CD4-positive, alpha-beta memory T cell (primary cell): ENCODE measurements at regions of chr1 and their contacts with region 1.

Region 1: GRCh38 chr1:197327776-197328364 is 59.8 kb downstream of the CRB1 start:
- DNase-seq: peak in 1 of 5 donors; percentile 3
- H3K4me3 ChIP-seq: no peak overlapping the region
- H3K4me3 Mint-ChIP-seq: no peak overlapping the region
- H3K27ac ChIP-seq: no peak overlapping the region
- H3K27ac Mint-ChIP-seq: peak overlapping the region in 1 of 7 donors; percentile 25
- H3K4me1 ChIP-seq: no peaks in the 10 kb centered on the region
- H3K4me1 Mint-ChIP-seq: no peaks in the 10 kb centered on the region
- H3K27me3 ChIP-seq: no peaks in the 10 kb centered on the region
- H3K27me3 Mint-ChIP-seq: no peaks in the 10 kb centered on the region

Region 2: GRCh38 chr1:197180252-197180878 is 147.5 kb before region 1 on chr1:
- CTCF ChIA-PET with region 1: interaction called, 10 read pairs
- POLR2A ChIA-PET with region 1: no interaction called
- intact Hi-C with region 1: no loop called
- DNase-seq: peak in 4 of 5 donors; percentile 26 to 36 (median 32)
- H3K4me3 ChIP-seq: no peak overlapping the region
- H3K4me3 Mint-ChIP-seq: no peak overlapping the region
- H3K27ac ChIP-seq: no peak overlapping the region
- H3K27ac Mint-ChIP-seq: no peak overlapping the region
- H3K4me1 ChIP-seq: no peaks in the 10 kb centered on the region
- H3K4me1 Mint-ChIP-seq: peaks cover 0 to 8% (median 5%) of the 10 kb centered on the region in 4 donors
- H3K27me3 ChIP-seq: no peaks in the 10 kb centered on the region
- H3K27me3 Mint-ChIP-seq: no peaks in the 10 kb centered on the region

Region 3: DNA sequence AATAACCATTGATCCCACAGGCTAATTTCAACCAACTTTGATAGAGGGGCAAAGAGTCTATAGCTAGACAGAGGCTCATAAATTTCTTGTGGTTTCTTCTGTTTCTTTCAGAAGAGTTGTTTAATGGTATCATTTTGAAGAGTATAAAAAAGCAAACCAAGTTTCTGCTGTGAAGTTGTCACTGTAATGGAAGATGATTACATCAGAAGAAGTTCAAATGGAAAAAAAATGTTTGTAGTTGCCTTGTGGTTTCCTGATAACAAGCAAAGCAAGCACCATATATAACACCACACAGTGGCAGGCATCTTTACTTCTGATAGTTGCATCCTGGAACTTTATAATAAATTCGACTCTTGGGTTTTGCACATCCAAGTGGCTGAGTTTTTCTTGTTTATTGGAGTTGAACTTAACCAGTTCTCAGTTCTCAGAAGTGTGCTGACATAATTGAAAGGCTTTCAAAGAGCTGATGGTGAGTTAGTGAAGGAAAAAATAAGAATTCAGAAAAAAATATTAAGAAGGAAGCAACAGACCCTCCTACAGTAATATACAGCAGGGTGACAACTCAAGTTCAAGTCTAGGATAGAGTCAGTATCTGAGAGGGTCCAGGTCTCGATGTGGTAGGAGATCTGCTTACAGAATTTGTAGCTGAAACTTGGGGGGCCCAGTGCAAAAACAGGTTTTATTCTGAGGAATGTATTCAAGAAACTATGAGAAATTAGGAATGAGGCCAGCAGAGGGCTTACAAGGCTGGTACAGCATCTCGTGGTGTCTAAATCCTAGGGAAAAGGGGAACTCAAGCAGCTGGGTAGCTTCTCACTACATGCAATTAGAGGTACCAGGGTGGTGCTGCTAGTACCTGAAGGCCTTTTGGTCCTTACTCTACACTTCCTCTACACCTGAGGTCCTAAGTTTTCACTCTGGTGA is 63.7 kb after region 1 on chr1:
- CTCF ChIA-PET with region 1: interaction called, 3 read pairs
- POLR2A ChIA-PET with region 1: no interaction called
- intact Hi-C with region 1: loop called (anchors 5 kb)
- DNase-seq: peak; percentile 48 to 81 (median 75)
- H3K4me3 ChIP-seq: no peak overlapping the region
- H3K4me3 Mint-ChIP-seq: peak overlapping the region; percentile 2 to 72 (median 49)
- H3K27ac ChIP-seq: peak overlapping the region; percentile 25
- H3K27ac Mint-ChIP-seq: peak overlapping the region; percentile 58 to 96 (median 87)
- H3K4me1 ChIP-seq: peaks cover 43% of the 10 kb centered on the region
- H3K4me1 Mint-ChIP-seq: peaks cover 30 to 42% (median 36%) of the 10 kb centered on the region in 4 donors
- H3K27me3 ChIP-seq: no peaks in the 10 kb centered on the region
- H3K27me3 Mint-ChIP-seq: peaks cover 0 to under 1% of the 10 kb centered on the region in 2 donors

Region 4: GRCh38 chr1:197423006-197423405 is 95.1 kb after region 1 on chr1:
- CTCF ChIA-PET with region 1: no interaction called
- POLR2A ChIA-PET with region 1: no interaction called
- intact Hi-C with region 1: no loop called
- DNase-seq: no peak
- H3K4me3 ChIP-seq: no peak overlapping the region
- H3K4me3 Mint-ChIP-seq: no peak overlapping the region
- H3K27ac ChIP-seq: no peak overlapping the region
- H3K27ac Mint-ChIP-seq: no peak overlapping the region
- H3K4me1 ChIP-seq: no peaks in the 10 kb centered on the region
- H3K4me1 Mint-ChIP-seq: no peaks in the 10 kb centered on the region
- H3K27me3 ChIP-seq: no peaks in the 10 kb centered on the region
- H3K27me3 Mint-ChIP-seq: peaks cover 0 to 3% of the 10 kb centered on the region in 2 donors